MCF 10A (cell line): ENCODE measurements at regions of chr6 and their contacts with region 1.

Region 1: DNA sequence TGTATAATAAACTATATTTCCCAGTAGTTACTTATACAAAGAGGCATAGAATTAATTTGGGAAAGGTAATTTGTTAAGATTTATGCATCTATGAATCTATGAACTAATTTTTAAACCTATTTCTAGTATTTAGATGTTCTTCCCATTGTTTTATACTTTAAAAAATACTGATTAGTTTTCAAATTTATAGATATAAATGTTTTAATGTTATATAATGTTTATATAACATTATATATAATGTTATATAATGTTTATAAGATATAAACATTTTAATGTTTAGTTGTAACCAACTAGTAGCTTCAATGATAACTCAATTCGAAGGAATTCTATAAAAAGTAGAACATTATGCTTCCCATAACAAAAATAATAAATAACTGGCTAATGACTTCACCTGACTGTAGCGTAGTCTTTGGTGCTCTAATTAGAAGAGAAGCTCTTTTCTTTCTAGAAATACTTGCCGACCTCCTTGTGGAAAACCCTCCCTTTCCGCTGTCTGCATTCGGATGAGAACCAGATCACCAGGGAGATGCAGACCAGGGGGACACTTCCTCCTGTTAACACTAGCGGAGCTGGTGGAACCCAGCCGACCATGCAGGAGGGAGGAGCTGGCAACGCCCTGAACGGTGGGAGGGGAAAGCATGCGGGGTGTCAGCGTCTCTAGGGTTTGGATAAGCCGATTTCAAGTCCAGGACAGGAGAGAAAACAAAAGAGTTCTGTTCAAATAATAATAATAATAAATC is 158.4 kb downstream of the OR2B2 start:
- DNase-seq: peak; percentile 93
- H3K4me3 Mint-ChIP-seq: peak overlapping the region; percentile 80
- H3K27ac Mint-ChIP-seq: peak overlapping the region; percentile 59
- H3K4me1 Mint-ChIP-seq: peaks cover 11% of the 10 kb centered on the region
- H3K27me3 Mint-ChIP-seq: no peaks in the 10 kb centered on the region
- CTCF ChIP-seq: no peak

Region 2: GRCh38 chr6:27188885-27189418 is 564.9 kb before region 1 on chr6:
- CTCF ChIA-PET with region 1: interaction called, 3 read pairs
- POLR2A ChIA-PET with region 1: interaction called, 10 read pairs
- intact Hi-C with region 1: loop called (anchors 1 kb)
- DNase-seq: peak; percentile 88
- H3K4me3 Mint-ChIP-seq: peak overlapping the region; percentile 82
- H3K27ac Mint-ChIP-seq: peak overlapping the region; percentile 53
- H3K4me1 Mint-ChIP-seq: no peaks in the 10 kb centered on the region
- H3K27me3 Mint-ChIP-seq: no peaks in the 10 kb centered on the region
- CTCF ChIP-seq: peak; percentile 80

Region 3: GRCh38 chr6:27312146-27312949 is 441.5 kb before region 1 on chr6 and contains the start of gene POM121L2:
- CTCF ChIA-PET with region 1: interaction called, 5 read pairs
- POLR2A ChIA-PET with region 1: interaction called, 3 read pairs
- intact Hi-C with region 1: loop called (anchors 5 kb)
- DNase-seq: peak; percentile 84
- H3K4me3 Mint-ChIP-seq: peak within 1 kb of the TSS; percentile 73
- H3K27ac Mint-ChIP-seq: no peak within 1 kb of the TSS
- H3K4me1 Mint-ChIP-seq: no peaks in the 10 kb centered on the region
- H3K27me3 Mint-ChIP-seq: peaks cover 12% of the 10 kb centered on the region
- CTCF ChIP-seq: peak; percentile 87
- total RNA-seq, gene POM121L2: not detected in 2 replicates

Region 4: DNA sequence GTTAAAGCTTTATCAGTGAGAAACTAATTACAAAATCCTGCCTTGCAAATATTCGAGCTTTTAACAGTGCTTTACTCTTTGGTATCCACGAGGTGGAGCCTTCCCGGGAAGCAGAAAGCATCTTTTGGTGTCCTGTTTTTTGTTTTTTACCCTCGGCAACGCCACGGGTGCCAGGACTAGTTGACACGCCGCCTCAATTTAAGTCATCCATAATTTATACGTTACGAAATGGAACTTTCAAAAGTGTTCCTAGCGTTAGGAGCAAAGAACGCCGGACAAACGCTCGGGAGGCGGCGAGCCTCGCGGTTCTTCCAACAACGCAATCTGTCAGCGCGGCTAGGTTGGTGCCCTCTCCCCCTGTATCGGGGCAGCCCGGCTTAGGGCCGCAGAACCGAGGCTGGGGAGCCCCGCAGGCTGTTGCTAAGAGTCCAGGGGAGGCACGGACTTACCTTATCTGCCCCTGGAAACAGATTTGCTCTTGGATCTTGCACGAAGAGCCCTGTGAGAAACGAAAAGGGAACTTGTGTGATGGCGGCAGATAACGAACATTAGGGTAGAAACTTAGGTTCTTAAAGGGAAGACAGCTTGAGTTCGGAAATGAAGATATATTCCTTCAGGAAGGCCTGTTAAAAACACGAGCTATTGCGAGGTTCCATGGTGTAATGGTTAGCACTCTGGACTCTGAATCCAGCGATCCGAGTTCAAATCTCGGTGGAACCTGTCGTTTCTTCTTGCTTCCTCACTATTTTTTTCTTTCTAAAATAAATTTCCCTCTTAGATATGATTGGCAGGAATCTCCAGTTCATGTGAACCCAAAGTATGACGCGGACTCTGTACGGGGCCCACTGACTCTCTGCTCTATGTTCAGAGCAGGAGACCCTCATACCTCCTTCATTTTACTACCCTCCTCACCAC is 234.7 kb before region 1 on chr6:
- CTCF ChIA-PET with region 1: interaction called, 9 read pairs
- POLR2A ChIA-PET with region 1: interaction called, 8 read pairs
- intact Hi-C with region 1: loop called (anchors 1 kb)
- DNase-seq: peak; percentile 88
- H3K4me3 Mint-ChIP-seq: peak overlapping the region; percentile 92
- H3K27ac Mint-ChIP-seq: peak overlapping the region; percentile 85
- H3K4me1 Mint-ChIP-seq: no peaks in the 10 kb centered on the region
- H3K27me3 Mint-ChIP-seq: no peaks in the 10 kb centered on the region
- CTCF ChIP-seq: peak; percentile 73

Region 5: GRCh38 chr6:27617700-27618689 is 135.8 kb before region 1 on chr6:
- CTCF ChIA-PET with region 1: interaction called, 11 read pairs
- POLR2A ChIA-PET with region 1: interaction called, 7 read pairs
- intact Hi-C with region 1: no loop called
- DNase-seq: peak; percentile 68
- H3K4me3 Mint-ChIP-seq: peak overlapping the region; percentile 89
- H3K27ac Mint-ChIP-seq: peak overlapping the region; percentile 86
- H3K4me1 Mint-ChIP-seq: peaks cover 6% of the 10 kb centered on the region
- H3K27me3 Mint-ChIP-seq: no peaks in the 10 kb centered on the region
- CTCF ChIP-seq: peak; percentile 9

Region 6: GRCh38 chr6:27772261-27773001 is 18.6 kb after region 1 on chr6:
- CTCF ChIA-PET with region 1: interaction called, 15 read pairs
- POLR2A ChIA-PET with region 1: interaction called, 8 read pairs
- intact Hi-C with region 1: no loop called
- DNase-seq: peak; percentile 87
- H3K4me3 Mint-ChIP-seq: peak overlapping the region; percentile 53
- H3K27ac Mint-ChIP-seq: no peak overlapping the region
- H3K4me1 Mint-ChIP-seq: peaks cover 9% of the 10 kb centered on the region
- H3K27me3 Mint-ChIP-seq: no peaks in the 10 kb centered on the region
- CTCF ChIP-seq: peak; percentile 89

Region 7: GRCh38 chr6:28433119-28433518 is 679.3 kb after region 1 on chr6:
- CTCF ChIA-PET with region 1: no interaction called
- POLR2A ChIA-PET with region 1: no interaction called
- intact Hi-C with region 1: no loop called
- DNase-seq: no peak
- H3K4me3 Mint-ChIP-seq: no peak overlapping the region
- H3K27ac Mint-ChIP-seq: no peak overlapping the region
- H3K4me1 Mint-ChIP-seq: no peaks in the 10 kb centered on the region
- H3K27me3 Mint-ChIP-seq: no peaks in the 10 kb centered on the region
- CTCF ChIP-seq: no peak